ENCODE measurements at regions of chr9 and their contacts with region 1.

Region 1: DNA sequence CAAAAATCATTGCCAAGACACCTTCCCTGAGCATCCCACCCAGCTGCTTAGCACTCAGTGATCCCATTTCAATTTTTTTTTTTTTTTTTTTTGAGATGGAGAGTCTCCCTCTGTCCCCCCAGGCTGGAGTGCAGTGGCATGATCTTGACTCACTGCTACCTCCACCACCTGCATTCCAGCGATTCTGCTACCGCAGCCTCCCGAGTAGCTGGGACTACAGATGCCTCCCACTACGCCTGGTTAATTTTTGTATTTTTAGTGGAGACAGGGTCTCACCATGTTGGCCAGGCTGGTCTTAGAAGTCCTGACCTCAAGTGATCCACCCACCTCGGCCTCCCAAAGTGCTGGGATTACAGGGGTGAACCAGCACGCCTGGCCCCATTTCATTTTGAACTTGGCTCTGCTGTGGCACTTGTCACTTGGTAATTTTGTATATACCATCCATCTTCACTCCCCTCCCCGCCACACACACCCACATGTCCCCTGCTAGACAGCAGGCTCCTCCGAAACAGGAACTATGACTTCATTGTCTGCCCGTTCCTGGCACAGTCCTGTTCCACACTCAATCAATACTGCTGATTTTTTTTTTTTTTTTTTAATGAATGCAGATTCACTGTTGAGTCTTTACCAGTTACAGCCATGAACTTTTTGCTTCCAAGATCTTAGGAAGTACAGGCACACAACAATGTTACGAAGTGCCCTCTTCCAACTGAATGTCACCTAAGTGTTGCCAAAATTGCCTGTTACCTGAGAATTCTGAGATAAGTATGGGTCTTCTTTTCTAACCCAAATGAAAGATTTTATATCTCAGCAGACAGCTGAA is 17.3 kb upstream of the ZBTB34 start:
- DNase-seq: no peak
- CTCF ChIP-seq: no peak

Region 2: DNA sequence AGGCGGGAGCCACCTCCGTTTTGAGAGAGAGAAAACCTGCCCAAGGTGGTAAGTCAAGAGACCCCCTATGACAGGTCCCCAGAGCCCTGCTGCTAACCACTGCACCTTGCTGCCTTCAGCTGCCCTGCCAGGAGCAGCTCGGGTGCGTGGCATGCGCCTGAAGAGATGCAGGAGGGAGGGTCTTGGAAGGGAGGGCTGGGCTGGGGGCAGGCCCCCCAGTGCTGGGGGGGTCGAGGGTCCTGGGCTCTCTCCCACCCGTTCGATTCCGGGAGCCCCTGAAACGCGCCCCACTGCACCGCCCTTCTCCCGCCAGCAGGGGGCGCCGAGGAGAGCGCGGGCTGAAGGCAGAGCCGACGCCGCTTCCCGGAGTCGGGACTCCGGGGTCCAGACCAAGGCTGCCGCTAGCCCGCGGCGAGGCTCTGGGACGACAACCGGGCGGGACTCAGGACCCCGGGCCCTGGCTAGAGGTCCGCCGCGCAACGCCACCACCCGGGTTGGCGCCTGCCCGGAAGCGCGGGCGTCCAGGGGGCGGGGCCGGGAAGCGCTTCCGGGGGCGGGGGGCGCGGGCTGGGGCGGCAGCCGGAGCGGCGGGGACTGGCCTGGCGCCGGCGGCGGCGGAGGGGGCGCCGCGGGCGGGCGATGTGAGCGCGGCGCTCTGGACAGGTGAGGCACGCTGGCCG is 17.0 kb after region 1 on chr9 and contains the start of gene ZBTB34:
- CTCF ChIA-PET with region 1: interaction called, 21 read pairs
- POLR2A ChIA-PET with region 1: no interaction called
- DNase-seq: peak; percentile 85
- CTCF ChIP-seq: peak; percentile 99

Region 3: DNA sequence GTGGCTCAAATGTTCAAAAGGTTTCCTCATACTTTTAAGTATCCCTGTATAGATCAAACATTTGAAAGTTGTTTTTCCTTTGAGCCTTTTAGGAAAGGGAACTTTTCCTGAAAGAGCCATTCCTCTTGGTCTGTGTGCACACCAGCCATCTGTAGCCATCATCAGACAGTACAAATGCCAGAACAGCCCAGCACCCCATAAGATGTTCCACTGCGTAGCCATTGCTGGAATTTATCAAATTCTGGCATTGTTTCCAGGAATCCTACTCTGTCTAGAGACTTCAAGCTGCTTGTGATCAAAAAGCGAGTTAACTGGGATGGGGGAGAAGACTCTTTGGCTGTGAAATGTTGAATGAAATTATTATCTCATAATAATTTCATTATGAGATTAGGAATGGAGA is 171.0 kb after region 1 on chr9:
- CTCF ChIA-PET with region 1: no interaction called
- POLR2A ChIA-PET with region 1: no interaction called
- DNase-seq: no peak
- CTCF ChIP-seq: no peak

Measured in GM10248 (cell line).